Vagina (tissue), 2 donors: ENCODE measurements at regions of chr3 and their contacts with region 1.

Region 1: DNA sequence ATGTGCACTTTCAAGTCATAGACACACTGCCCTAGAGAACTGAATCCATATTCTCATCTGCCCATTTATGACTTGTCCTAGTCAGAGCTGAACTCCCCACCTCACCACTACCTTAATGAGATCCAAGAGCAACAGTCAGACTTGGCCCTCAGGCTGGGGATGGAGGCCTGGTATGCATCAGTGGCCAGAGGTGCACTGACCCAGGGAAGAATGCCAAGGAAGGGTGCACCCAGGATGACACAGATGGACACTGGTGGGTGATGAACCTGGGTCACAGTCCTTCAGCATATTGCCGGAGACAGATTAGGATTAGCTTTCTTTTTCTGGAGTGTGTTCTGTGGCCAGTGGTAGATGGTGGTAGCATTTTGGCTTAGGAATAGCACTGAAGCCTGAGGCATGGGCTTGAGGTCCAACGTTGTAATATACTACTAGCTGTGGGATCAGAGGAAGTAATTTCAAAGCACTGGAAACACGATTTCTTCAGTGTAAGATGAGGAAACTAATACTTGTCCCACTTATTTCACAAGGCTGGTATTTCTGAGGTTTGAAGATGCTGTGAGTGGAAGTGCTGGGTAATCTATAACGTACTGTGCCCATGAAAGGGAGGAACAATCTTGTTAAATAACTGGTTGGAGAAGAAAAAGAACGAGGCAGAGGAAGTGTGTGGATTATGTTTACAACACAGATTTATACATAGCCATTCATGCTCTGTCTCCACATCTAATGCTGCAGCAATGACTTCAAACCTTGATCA is 265.0 kb downstream of the THRB start:
- DNase-seq: peak in 1 of 2 donors; percentile 54
- H3K4me3 ChIP-seq: no peak overlapping the region
- H3K27ac ChIP-seq: no peak overlapping the region
- H3K4me1 ChIP-seq: no peaks in the 10 kb centered on the region
- H3K27me3 ChIP-seq: no peaks in the 10 kb centered on the region
- CTCF ChIP-seq: no peak
- POLR2A ChIP-seq: no peak

Region 2: GRCh38 chr3:24004171-24004938 is 225.3 kb before region 1 on chr3:
- intact Hi-C with region 1: loop called (anchors 5 kb)
- DNase-seq: peak in 1 of 2 donors; percentile 9
- H3K4me3 ChIP-seq: no peak overlapping the region
- H3K27ac ChIP-seq: no peak overlapping the region
- H3K4me1 ChIP-seq: no peaks in the 10 kb centered on the region
- H3K27me3 ChIP-seq: no peaks in the 10 kb centered on the region
- CTCF ChIP-seq: no peak
- POLR2A ChIP-seq: no peak